ENCODE measurements at regions of chr2 and their contacts with region 1.

Region 1: DNA sequence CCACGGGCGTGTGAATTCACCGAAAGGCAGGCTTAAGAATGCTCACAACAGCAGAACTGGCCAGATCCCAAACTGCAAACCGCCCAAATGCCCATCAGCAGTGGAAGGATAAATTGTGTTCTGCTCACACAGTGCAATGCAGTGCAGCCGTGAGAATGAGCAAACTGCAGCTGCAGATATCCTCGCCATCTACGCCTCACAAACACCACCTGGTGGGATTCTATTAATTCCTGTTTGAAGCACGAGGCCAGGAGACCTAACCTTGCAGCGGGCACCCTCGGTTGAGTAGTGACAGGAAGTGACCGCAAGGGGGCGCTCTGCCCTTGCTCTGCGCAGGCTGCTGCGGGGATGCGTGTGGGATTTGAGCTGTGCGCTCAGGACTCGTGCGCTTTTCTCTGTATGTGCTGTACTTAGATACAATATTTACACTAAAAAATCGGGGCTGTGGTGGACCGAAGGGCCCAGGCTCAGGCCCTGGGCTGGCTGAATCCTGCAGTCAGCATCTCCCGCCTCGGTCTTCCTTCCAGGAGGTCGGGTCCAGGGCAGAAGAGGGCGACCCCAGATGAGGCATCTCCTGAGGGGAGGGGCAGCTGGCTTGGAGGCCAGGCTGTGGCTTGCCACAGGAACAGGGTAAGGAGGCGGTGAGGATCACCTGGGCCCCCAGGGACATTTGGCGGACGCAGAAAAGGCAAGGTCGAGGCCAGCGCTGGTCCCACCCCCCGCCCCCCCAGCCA is 19.8 kb upstream of the PDIA6 start:
- DNase-seq: peak; percentile 89

Region 2: GRCh38 chr2:10821296-10821695 is 11.1 kb before region 1 on chr2:
- CTCF ChIA-PET with region 1: interaction called, 10 read pairs
- POLR2A ChIA-PET with region 1: interaction called, 3 read pairs
- DNase-seq: no peak

Region 3: DNA sequence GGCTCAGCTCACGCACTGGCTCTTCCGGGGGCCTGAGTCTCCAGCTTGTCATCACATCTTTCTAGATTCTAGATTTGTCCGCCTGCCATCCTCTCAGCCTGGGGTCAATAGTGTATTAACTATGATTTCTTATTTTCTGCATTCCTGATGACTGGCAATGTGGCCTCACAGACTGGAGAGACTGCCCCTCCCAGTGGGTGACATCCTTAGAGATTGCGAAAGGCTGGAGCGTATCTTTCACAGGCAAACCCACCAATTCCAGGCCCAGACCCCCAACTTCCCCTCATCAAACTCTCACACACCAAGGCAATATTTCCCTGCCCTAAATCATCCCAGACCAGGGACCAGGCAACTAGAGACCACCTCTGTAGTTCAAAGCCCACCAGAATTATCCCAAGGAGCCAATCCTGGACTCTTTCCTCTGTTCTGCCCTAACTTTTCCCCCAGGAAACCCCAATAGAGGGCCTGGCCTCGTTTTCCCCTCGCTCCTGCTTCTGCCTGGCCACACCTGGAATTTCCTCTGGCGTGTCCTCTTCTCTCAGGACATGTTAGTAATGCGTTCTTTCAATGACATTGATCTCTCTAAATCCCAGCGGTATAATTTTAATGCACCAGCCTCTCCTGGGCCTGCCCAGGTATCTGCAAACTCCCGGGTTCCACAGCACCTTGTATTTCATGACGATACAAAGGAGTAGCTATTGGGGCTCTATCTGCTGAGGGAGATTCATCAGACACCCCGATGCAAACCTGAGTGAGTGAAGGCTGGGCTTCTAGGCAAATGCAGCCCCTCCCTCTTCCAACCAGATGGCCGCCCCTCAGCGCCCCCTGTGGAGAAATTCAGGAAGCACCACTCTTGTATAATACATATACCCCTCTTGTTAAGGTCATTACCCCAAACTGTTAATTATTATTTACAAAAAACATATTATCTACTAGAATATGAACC is 77.0 kb after region 1 on chr2:
- CTCF ChIA-PET with region 1: interaction called, 11 read pairs
- POLR2A ChIA-PET with region 1: no interaction called
- DNase-seq: peak; percentile 67

Region 4: GRCh38 chr2:11124503-11125068 is 292.2 kb after region 1 on chr2:
- CTCF ChIA-PET with region 1: interaction called, 27 read pairs
- POLR2A ChIA-PET with region 1: interaction called, 3 read pairs
- DNase-seq: peak; percentile 86